Mammary epithelial cell (primary cell): ENCODE measurements at regions of chr1 and their contacts with region 1.

Region 1: DNA sequence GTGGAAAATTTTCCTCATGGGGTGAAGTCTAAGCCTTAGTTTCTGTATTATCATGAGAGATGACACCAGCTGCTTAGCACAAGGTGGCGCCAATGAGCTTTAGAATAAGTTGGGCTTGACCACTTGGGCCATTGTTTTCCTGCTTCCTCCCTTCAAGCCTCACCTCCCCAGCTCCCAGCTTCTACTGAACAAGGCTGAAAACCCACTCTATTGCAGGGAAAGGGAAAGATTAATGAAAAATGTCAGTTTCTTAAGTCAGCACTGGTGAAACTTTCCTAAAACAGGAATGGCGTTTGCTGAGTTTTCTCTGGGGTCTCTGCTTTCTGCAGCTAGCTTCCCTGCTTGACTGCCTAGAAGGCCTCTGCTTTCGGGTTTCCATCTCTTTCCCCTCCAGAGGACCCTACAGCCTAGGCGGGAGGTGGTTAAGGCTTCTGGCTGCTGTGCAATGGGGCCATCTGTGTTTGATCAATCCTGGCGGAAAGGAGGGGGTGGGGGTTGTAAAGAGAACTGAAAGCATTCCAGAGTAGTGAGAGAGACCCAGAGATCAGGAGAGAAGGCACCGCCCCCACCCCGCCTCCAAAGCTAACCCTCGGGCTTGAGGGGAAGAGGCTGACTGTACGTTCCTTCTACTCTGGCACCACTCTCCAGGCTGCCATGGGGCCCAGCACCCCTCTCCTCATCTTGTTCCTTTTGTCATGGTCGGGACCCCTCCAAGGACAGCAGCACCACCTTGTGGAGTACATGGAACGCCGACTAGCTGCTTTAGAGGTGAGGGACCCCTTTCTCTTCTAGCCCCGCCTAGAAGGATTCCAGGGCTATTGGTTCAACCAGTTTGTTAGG is at the start of gene OLFML3:
- DNase-seq: peak; percentile 75
- H3K4me3 ChIP-seq: no peak within 1 kb of the TSS
- H3K27ac ChIP-seq: no peak within 1 kb of the TSS
- H3K4me1 ChIP-seq: peaks cover 18% of the 10 kb centered on the region
- H3K27me3 ChIP-seq: no peaks in the 10 kb centered on the region
- CTCF ChIP-seq: peak; percentile 65 to 74
- total RNA-seq, gene OLFML3: 0.66 to 0.83 TPM

Region 2: DNA sequence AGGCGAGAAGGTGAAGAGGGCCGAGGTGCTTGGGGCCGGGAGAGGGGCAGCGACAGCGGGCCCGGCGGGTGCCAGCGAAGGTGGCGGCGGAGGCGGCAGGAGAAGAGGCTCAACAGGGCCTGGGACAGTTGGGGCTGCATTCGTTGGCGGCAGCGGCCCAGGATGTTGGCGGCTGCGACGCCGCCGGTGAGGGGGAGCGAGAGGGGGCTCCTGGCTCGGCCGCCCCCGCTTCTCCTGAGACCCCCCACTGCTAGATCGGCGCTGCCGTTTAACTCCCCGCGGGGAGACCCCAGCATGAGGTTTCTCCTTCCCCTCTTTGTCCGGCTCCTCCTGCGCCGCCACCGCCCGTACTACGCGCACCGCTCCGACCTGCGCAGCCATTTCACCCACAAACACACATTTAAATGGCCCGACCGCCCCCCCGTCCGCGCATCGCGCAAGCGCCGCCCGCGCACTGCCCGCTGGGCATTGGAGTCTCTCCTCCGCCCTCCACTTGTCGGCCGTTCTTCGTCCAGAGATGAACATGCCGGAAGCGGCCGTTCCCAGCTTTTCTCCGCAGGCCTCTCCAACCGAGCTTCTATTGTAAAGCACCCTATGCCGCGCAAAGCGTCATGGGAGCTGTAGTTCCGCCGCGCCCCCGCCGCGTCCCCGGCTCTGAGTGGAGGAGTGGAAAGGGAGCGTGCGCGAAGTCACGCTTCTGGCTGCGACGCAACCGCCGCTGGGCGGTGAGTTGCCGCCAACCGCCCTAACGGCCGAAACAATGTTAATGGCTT is 167.0 kb before region 1 on chr1 and contains the start of gene RSBN1:
- CTCF ChIA-PET with region 1: no interaction called
- dilution Hi-C with region 1: no loop called
- in situ Hi-C with region 1: no loop called
- intact Hi-C with region 1: no loop called
- DNase-seq: peak; percentile 100
- H3K4me3 ChIP-seq: peak within 1 kb of the TSS; percentile 89 to 95 (median 89)
- H3K27ac ChIP-seq: peak within 1 kb of the TSS; percentile 89
- H3K4me1 ChIP-seq: peaks cover 18% of the 10 kb centered on the region
- H3K27me3 ChIP-seq: no peaks in the 10 kb centered on the region
- CTCF ChIP-seq: no peak
- total RNA-seq, gene RSBN1: 10.0 to 12.5 TPM

Region 3: DNA sequence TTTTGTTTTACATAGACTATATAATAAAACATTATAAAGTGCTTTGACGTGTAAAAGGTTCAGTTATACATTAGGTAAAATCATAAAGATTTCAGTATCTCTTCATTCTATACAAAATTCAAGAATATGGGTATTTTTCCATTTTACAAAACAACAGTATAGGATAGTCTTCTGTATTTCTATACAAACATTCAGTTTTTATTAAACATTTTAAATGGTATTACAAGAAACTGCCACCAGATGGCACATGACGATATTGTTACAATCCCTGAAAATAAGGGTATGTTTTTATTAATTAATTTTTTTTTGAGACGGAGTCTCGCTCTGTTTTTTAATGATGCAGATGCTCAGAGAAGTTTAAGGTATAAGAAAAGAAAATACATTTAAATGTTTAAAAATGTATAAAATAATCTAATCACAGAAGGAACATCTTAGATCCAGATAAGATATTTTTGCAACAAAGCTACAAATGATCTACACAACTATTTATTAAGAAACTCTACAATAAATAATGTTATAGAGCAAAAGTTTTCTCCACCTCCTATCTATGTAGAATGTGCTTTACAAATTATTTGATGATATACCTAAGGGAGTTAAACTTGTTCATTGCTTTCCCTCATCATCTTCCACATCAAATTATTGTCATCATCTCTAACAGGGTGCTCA is 143.3 kb before region 1 on chr1:
- CTCF ChIA-PET with region 1: no interaction called
- dilution Hi-C with region 1: no loop called
- in situ Hi-C with region 1: no loop called
- intact Hi-C with region 1: loop called (anchors 5 kb)
- DNase-seq: peak; percentile 35
- H3K4me3 ChIP-seq: no peak overlapping the region
- H3K27ac ChIP-seq: no peak overlapping the region
- H3K4me1 ChIP-seq: peaks cover 6% of the 10 kb centered on the region
- H3K27me3 ChIP-seq: no peaks in the 10 kb centered on the region
- CTCF ChIP-seq: peak; percentile 21 to 51

Region 4: DNA sequence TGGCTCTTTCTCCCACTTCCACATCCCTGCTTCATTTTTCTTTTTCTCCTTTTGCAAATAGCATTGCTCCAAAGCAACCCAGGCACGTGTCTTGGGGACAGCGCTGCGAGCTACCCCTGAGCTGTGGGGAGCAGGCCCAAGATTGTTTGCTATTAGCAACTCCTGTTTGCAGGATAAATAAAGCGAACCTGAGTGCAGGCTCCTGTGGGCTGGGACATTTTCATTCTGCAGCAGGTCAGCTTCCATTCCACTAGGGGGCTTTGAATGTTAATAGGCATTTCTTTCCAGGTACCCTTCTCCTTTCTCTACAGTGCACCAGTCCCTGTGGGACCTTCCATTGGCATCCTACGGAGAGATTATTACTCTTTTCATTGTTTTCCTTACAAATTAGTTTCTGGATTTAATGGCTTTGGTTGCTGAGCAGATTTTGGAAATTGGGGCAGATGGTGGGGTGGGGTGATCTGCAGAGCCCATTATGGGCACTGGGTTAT is 54.2 kb after region 1 on chr1:
- CTCF ChIA-PET with region 1: no interaction called
- dilution Hi-C with region 1: no loop called
- in situ Hi-C with region 1: no loop called
- intact Hi-C with region 1: no loop called
- DNase-seq: no peak
- H3K4me3 ChIP-seq: no peak overlapping the region
- H3K27ac ChIP-seq: no peak overlapping the region
- H3K4me1 ChIP-seq: peaks cover 27% of the 10 kb centered on the region
- H3K27me3 ChIP-seq: no peaks in the 10 kb centered on the region
- CTCF ChIP-seq: peak; percentile 56 to 62

Region 5: GRCh38 chr1:114075546-114076242 is 96.6 kb after region 1 on chr1:
- CTCF ChIA-PET with region 1: no interaction called
- dilution Hi-C with region 1: loop called (anchors 5 kb)
- in situ Hi-C with region 1: no loop called
- intact Hi-C with region 1: no loop called
- DNase-seq: no peak
- H3K4me3 ChIP-seq: no peak overlapping the region
- H3K27ac ChIP-seq: no peak overlapping the region
- H3K4me1 ChIP-seq: no peaks in the 10 kb centered on the region
- H3K27me3 ChIP-seq: no peaks in the 10 kb centered on the region
- CTCF ChIP-seq: no peak

Region 6: GRCh38 chr1:114219172-114219868 is 240.2 kb after region 1 on chr1:
- CTCF ChIA-PET with region 1: no interaction called
- dilution Hi-C with region 1: no loop called
- in situ Hi-C with region 1: no loop called
- intact Hi-C with region 1: loop called (anchors 1 kb)
- DNase-seq: no peak
- H3K4me3 ChIP-seq: no peak overlapping the region
- H3K27ac ChIP-seq: no peak overlapping the region
- H3K4me1 ChIP-seq: no peaks in the 10 kb centered on the region
- H3K27me3 ChIP-seq: peaks cover 2% of the 10 kb centered on the region
- CTCF ChIP-seq: peak in 1 of 2 donors; percentile 42

Region 7: DNA sequence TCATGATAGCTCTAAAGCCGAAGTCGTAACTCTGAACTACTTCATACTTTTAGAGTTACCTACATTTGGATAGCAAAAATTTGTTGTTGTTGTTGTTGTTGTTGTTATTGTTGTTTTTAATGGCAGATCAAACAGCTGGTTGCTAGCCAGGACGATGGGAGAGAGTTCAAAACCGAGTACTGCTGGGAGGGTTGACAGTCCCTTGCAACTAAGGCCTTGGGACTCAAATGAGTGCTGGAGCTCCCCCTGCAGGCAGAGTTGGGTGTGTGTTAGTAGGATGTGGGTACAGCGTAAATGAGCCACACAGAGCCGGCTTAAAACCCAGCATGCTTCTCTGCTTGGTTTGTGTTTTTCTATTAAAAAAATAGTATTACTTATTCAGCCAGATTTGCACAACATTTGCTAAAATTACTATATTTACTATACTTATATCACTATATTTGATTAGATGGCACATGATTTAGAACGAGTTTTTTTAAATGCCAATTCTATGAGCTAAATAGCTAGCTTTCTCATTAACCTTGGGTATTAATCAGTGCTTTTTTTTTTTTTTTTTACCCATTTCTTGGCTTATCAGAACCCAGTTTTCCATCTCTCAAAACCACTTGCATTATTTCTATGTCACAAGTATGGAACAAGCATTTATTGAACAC is 303.8 kb after region 1 on chr1:
- CTCF ChIA-PET with region 1: interaction called, 6 read pairs
- dilution Hi-C with region 1: no loop called
- in situ Hi-C with region 1: loop called (anchors 10 kb)
- intact Hi-C with region 1: loop called (anchors 1 kb)
- DNase-seq: peak; percentile 64
- H3K4me3 ChIP-seq: no peak overlapping the region
- H3K27ac ChIP-seq: no peak overlapping the region
- H3K4me1 ChIP-seq: no peaks in the 10 kb centered on the region
- H3K27me3 ChIP-seq: no peaks in the 10 kb centered on the region
- CTCF ChIP-seq: peak; percentile 85 to 93

Region 8: GRCh38 chr1:114670083-114671010 is 691.3 kb after region 1 on chr1:
- CTCF ChIA-PET with region 1: no interaction called
- dilution Hi-C with region 1: no loop called
- in situ Hi-C with region 1: loop called in 1 of 2 experiments (anchors 25 kb)
- intact Hi-C with region 1: loop called (anchors 2 kb)
- DNase-seq: peak; percentile 97
- H3K4me3 ChIP-seq: peak overlapping the region; percentile 72 to 97 (median 97)
- H3K27ac ChIP-seq: peak overlapping the region; percentile 100
- H3K4me1 ChIP-seq: peaks cover 13% of the 10 kb centered on the region
- H3K27me3 ChIP-seq: no peaks in the 10 kb centered on the region
- CTCF ChIP-seq: no peak

Region 9: DNA sequence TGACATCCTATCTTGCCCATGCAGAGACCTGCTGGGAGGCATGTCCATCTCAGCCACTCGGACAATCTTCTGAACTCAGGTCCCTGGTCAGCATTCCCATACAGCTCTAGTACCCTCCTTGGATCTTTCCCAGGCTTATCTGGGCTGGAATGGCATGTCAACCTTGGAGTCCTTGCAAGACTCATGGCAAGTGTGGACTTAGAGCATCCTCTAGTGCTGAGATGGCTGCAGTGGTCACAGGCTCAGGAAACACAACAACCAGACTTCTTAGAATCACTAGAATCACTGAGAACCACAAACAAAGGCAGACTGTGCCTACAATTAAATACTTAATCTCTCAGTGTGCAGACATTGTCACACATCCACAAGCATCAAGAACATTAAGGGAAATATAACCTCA is 977.5 kb after region 1 on chr1:
- CTCF ChIA-PET with region 1: no interaction called
- dilution Hi-C with region 1: no loop called
- in situ Hi-C with region 1: no loop called
- intact Hi-C with region 1: loop called (anchors 1 kb)
- DNase-seq: peak; percentile 23
- H3K4me3 ChIP-seq: no peak overlapping the region
- H3K27ac ChIP-seq: no peak overlapping the region
- H3K4me1 ChIP-seq: no peaks in the 10 kb centered on the region
- H3K27me3 ChIP-seq: peaks cover 2% of the 10 kb centered on the region
- CTCF ChIP-seq: peak; percentile 74 to 84